A673 (cell line): ENCODE measurements at regions of chr17 and their contacts with region 1.

Region 1: DNA sequence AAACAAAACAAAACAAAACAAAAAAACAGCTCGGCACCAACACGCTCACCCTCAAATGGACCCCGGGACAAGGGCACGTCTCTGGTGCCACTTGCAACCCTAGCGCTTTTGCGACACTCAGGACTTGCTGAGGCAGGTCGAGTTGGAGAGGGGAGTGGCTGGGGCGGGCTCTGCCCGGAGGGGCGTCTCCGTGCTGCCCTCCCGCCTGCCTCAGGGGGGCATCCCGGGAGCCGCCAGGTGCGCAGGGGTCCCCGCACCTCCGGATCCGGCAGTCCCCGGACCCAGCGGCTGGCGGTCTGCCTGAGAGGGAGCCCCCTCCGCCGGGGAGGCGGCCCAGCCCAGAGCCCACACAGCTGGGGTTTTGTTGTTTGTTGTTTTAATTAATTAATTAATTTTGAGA is at the start of gene SLC52A1:
- DNase-seq: no peak
- H3K4me3 ChIP-seq: peak within 1 kb of the TSS; percentile 42
- H3K27ac ChIP-seq: no peak within 1 kb of the TSS
- H3K4me1 ChIP-seq: peaks cover 4% of the 10 kb centered on the region
- H3K27me3 ChIP-seq: no peaks in the 10 kb centered on the region
- CTCF ChIP-seq: no peak
- total RNA-seq, gene SLC52A1: not detected in 2 replicates

Region 2: GRCh38 chr17:5049314-5049895 is 14.1 kb after region 1 on chr17:
- CTCF ChIA-PET with region 1: no interaction called
- POLR2A ChIA-PET with region 1: interaction called, 27 read pairs
- intact Hi-C with region 1: no loop called
- DNase-seq: no peak
- H3K4me3 ChIP-seq: no peak overlapping the region
- H3K27ac ChIP-seq: no peak overlapping the region
- H3K4me1 ChIP-seq: no peaks in the 10 kb centered on the region
- H3K27me3 ChIP-seq: no peaks in the 10 kb centered on the region
- CTCF ChIP-seq: no peak